H1 (cell line): ENCODE measurements at regions of chr18 and their contacts with region 1.

Region 1: DNA sequence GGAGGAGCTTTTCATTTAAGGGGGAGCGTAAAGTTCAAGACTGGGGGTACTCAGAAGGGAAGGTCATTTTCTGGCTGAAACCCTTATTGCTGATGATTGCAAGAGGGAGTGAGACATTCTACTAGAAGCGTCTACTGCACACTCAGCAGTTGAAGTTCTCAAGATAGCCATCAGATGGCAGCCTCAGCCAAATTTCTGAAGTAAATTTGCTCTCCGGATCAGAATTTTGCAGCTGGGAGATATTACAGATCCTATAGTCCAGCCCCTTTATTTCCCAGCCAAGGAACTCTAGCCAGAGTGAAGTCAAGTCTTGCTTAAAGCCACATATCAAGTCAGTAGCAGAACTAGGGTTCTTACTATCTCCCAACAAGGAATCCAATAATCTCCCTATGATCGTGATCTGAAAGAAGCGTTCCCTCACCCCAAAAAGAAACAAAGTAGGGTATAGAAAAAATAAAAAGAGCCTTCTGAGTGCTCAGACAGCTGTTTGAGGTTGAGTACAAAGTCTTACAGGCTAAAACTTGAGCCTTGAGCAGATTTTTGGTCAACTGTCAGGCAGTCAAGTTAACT is 24.0 kb downstream of the RAX start:
- DNase-seq: peak in 1 of 2 experiments; percentile 66
- H3K4me3 ChIP-seq: no peak overlapping the region
- H3K27ac ChIP-seq: no peak overlapping the region
- H3K4me1 ChIP-seq: no peaks in the 10 kb centered on the region
- H3K27me3 ChIP-seq: no peaks in the 10 kb centered on the region
- CTCF ChIP-seq: peak in 2 of 3 experiments; percentile 81 to 84; a peak in 3 of 4 replicates
- EP300 ChIP-seq: no peak
- POLR2A ChIP-seq: no peak
- RAD21 ChIP-seq: peak; percentile 85 to 93

Region 2: DNA sequence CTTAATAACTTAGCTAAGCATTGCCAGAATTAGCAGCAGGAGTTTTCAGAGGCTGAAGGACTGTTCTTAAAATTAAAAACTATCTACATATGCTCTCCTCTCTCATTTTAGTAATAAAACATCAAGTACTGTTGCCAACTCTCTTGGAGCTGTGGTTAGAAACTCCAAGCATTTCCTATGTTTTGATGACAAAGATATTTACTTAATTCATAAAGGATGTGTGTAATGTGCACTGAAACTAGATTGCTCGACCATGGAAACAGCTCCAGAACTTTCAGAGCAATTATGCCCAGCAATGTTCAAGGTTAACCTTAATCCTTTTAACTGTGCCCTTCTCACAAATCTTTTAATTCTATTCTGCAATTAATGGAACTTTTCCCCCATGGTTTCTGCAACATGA is 20.9 kb before region 1 on chr18:
- CTCF ChIA-PET with region 1: interaction called, 19 read pairs
- POLR2A ChIA-PET with region 1: interaction called, 3 read pairs
- DNase-seq: no peak
- H3K4me3 ChIP-seq: no peak overlapping the region
- H3K27ac ChIP-seq: no peak overlapping the region
- H3K4me1 ChIP-seq: no peaks in the 10 kb centered on the region
- H3K27me3 ChIP-seq: peaks cover 3 to 7% (median 5%) of the 10 kb centered on the region in 4 experiments
- CTCF ChIP-seq: no peak
- EP300 ChIP-seq: no peak
- POLR2A ChIP-seq: no peak
- RAD21 ChIP-seq: no peak

Region 3: DNA sequence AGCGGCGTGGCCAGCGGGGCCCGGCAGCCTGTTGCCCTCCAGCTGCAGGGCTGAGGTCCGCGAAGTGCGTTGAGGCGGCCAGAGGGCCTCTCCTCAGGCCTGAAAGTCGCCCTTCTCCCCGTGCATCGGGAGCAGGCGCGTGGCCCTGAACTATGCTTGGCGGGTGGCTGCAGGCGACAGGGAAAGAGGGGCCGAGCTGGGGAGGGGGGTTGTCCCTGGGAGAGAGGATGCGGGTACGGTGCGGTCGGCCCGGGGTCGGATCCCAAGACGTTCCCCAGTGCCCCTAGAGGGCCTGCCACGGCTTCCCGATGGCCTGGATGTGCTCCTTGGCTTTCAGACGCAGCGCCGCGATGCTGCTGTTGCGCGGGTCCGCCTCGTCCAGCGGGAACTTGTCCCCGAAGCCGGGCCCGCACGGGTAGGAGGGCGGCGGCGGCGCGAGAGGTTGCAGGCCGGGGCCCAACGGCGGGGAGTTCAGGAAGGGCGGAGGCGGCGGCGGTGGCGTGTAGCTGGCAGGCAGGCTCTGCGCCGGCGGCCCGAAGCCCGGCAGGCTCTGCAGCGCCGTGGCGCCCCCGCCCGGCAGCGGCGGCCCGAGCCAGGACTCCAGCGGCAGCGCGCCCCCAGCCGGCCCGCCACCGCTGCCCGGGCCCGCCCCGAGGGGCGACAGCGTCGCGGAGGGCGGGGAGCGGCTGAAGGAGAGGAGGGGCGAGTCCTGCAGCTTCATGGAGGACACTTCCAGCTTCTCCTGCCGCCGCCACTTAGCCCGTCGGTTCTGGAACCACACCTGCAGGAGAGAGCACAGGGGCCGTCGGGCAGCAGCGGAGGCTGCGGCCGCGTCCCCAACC is 19.7 kb after region 1 on chr18:
- CTCF ChIA-PET with region 1: interaction called, 129 read pairs
- POLR2A ChIA-PET with region 1: interaction called, 7 read pairs
- DNase-seq: peak in 1 of 2 experiments; percentile 89
- H3K4me3 ChIP-seq: peak overlapping the region; percentile 51 to 67 (median 61)
- H3K27ac ChIP-seq: no peak overlapping the region
- H3K4me1 ChIP-seq: peaks cover 0 to 44% (median 24%) of the 10 kb centered on the region in 4 experiments; a peak in 6 of 7 replicates
- H3K27me3 ChIP-seq: peaks cover 88 to 98% (median 93%) of the 10 kb centered on the region in 4 experiments
- CTCF ChIP-seq: peak in 2 of 3 experiments; percentile 52 to 92; a peak in 3 of 4 replicates
- EP300 ChIP-seq: no peak
- POLR2A ChIP-seq: no peak
- RAD21 ChIP-seq: peak in 1 of 2 experiments; percentile 47; a peak in 2 of 4 replicates

Region 4: GRCh38 chr18:59308248-59308937 is 59.1 kb after region 1 on chr18:
- CTCF ChIA-PET with region 1: interaction called, 20 read pairs
- POLR2A ChIA-PET with region 1: no interaction called
- DNase-seq: peak; percentile 15 to 89
- H3K4me3 ChIP-seq: peak overlapping the region; percentile 14 to 54 (median 47); a peak in 7 of 8 replicates
- H3K27ac ChIP-seq: no peak overlapping the region
- H3K4me1 ChIP-seq: no peaks in the 10 kb centered on the region; a peak in 1 of 7 replicates
- H3K27me3 ChIP-seq: peaks cover 0 to 13% (median 6%) of the 10 kb centered on the region in 4 experiments; a peak in 6 of 7 replicates
- CTCF ChIP-seq: peak; percentile 58 to 92 (median 74)
- EP300 ChIP-seq: no peak
- POLR2A ChIP-seq: no peak
- RAD21 ChIP-seq: peak; percentile 75 to 82